ENCODE measurements at regions of chr16 and their contacts with region 1.

Region 1: GRCh38 chr16:82580298-82580890 is 46.4 kb upstream of the CDH13 start:
- DNase-seq: no peak
- ATAC-seq: peak; percentile 69

Region 2: GRCh38 chr16:82263521-82264143 is 316.8 kb before region 1 on chr16:
- intact Hi-C with region 1: loop called (anchors 5 kb)
- DNase-seq: peak; percentile 48
- ATAC-seq: peak; percentile 93